A549 (cell line): ENCODE measurements at regions of chr6 and their contacts with region 1.

Region 1: DNA sequence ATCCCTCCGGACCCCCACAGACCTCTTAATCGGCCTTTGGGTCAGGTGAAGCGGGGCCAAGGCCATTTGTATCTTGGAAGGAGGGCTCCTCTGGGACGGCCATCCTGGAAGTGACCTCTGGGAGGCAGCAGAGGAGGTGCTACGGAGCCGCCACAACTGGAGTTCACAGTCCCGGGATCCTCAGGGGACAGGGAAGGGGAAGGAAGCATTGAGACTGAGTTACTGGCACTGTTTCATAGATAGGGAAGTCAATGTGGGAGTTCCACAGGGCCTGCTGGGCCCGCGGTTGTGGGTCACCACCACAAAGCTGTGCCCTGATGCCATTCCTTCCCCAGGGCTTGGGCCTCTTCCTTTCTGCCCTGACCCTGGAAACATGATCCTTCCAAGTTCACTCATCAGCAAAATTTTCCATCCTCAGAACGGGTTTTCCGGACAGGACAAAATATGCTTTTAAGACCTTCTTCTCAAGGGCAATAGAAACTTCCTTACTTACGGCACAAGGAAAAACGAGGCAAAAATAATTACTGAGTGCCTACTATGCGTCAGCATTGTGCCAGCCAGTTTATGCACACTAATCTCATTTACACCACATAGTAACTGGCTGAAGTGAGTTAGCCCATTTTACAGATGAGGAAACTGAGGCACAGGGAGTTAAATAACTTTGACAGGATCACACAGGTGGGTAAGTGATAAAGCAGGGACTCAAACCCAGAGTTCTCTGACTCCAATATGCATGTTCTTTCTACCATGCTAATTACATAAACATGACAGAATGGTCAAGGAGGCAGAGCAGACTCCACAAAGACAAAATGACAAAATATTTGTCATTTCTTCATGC is 143.8 kb downstream of the UNC5CL start:
- DNase-seq: peak; percentile 50 to 76
- ATAC-seq: peak; percentile 98 to 99
- H3K4me3 ChIP-seq: no peak overlapping the region
- H3K27ac ChIP-seq: peak overlapping the region; percentile 80 to 83
- H3K4me1 ChIP-seq: peaks cover 8% of the 10 kb centered on the region
- CTCF ChIP-seq: peak; percentile 64
- EP300 ChIP-seq: no peak
- POLR2A ChIP-seq: no peak
- RAD21 ChIP-seq: peak; percentile 89 to 91

Region 2: DNA sequence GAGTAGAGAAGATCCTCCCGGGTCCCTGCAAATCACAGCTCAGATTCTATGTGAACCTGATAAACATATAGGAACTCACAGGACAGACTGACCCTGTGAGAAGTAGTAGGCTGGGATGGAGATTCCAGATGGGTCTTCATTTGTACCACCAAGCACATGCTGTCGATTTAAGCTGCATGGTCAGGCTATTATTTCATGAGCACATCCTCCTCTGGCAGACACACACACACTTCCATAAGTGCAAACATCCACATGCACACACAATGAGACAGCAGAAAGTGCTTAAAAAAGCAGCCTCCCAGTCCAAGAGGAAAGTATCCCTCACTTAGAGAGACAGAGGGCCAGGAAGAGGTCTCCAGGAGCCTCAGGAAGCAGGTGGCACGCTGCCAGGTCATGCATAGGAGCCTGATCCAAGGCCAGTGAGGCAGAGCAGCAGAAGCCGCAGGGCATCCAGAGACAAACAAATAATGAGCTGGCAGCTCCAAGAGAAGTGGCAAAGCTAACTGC is 12.1 kb after region 1 on chr6:
- CTCF ChIA-PET with region 1: interaction called, 25 read pairs
- POLR2A ChIA-PET with region 1: no interaction called
- DNase-seq: peak; percentile 71 to 92
- ATAC-seq: peak; percentile 84 to 90
- H3K4me3 ChIP-seq: 0 out of 3 replicates have a peak overlapping the region, but pooled peaks have one; percentile 11
- H3K27ac ChIP-seq: peak overlapping the region; percentile 93 to 98
- H3K4me1 ChIP-seq: peaks cover 41% of the 10 kb centered on the region
- CTCF ChIP-seq: no peak
- EP300 ChIP-seq: peak; percentile 23 to 54; a peak in 2 of 5 replicates
- POLR2A ChIP-seq: no peak
- RAD21 ChIP-seq: no peak; a peak in 1 of 5 replicates

Region 3: DNA sequence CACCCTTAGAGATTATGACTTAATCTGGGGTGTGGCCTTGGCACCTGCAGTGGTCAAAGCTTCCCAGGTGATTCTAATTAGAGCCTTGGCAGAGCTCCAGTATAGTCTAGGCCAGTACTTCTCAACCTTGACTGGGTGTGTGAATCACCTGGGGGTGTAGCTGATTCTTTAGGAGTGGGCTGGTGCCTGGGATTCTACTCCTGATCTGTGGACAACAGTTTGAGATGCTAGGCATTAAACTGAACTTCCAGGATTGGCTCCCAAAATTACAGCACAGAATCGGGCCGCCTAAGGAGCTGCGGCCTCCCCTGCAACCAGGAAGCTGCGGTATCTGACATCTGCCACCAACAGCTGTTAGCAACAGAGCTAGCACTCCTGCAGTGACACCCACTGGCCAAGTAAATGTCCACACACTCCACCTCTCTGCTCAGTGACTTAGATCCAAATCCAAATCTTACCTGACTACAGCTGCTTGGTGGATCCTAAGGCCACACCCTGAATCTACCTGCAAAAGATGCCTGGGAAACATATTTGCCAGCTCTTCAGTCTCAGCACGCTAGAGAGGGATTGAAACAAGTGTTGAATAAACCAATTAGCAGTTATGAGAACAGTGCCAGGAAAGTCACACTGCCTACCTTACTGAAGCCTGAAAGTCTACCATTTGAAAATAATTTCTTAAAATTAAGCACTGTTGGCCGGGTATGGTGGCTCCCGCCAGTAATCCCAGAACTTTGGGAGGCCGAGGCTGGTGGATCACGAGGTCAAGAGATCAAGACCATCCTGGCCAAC is 17.2 kb after region 1 on chr6:
- CTCF ChIA-PET with region 1: interaction called, 25 read pairs
- POLR2A ChIA-PET with region 1: no interaction called
- DNase-seq: peak; percentile 26 to 73
- ATAC-seq: peak; percentile 90 to 93
- H3K4me3 ChIP-seq: no peak overlapping the region
- H3K27ac ChIP-seq: peak overlapping the region; percentile 67 to 74
- H3K4me1 ChIP-seq: peaks cover 30% of the 10 kb centered on the region
- CTCF ChIP-seq: peak; percentile 57
- EP300 ChIP-seq: no peak
- POLR2A ChIP-seq: no peak
- RAD21 ChIP-seq: peak; percentile 67 to 78

Region 4: DNA sequence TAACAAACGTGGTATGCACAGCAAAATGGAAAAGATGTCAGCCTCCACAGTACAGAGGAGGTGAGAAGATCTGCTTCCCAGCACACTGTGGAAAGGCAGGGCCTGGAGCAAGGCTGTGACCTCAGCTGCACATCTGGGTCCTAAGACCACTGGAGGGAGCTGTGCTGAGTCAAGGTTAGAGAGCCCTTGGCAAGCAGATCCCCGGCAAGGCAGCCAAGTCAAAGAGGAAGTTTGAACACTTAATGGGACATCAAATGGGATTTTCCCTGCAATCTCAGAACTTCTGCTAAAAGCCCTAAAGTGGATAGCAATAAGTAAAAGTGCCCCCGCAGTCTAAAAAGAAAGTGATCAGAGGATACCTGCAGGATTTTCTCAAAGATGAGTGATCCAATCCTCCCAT is 104.4 kb after region 1 on chr6:
- CTCF ChIA-PET with region 1: interaction called, 20 read pairs
- POLR2A ChIA-PET with region 1: no interaction called
- DNase-seq: peak; percentile 53 to 81
- ATAC-seq: peak; percentile 60 to 80; a peak in 5 of 6 replicates
- H3K4me3 ChIP-seq: no peak overlapping the region
- H3K27ac ChIP-seq: peak overlapping the region; percentile 96 to 97
- H3K4me1 ChIP-seq: peaks cover 48% of the 10 kb centered on the region
- CTCF ChIP-seq: peak; percentile 41
- EP300 ChIP-seq: no peak
- POLR2A ChIP-seq: no peak
- RAD21 ChIP-seq: peak in 1 of 2 experiments; percentile 39; a peak in 2 of 5 replicates